WTC11 (cell line): ENCODE measurements at regions of chr19 and their contacts with region 1.

Region 1: GRCh38 chr19:2315818-2316353 is 7.9 kb upstream of the LINGO3 start:
- DNase-seq: peak; percentile 82
- ATAC-seq: peak; percentile 71
- H3K4me3 Mint-ChIP-seq: no peak overlapping the region
- H3K27ac Mint-ChIP-seq: no peak overlapping the region
- H3K4me1 Mint-ChIP-seq: 0 out of 2 replicates have a peak, but pooled peaks cover 2% of the 10 kb centered on the region
- H3K27me3 Mint-ChIP-seq: peaks cover 9% of the 10 kb centered on the region
- CTCF ChIP-seq: no peak

Region 2: DNA sequence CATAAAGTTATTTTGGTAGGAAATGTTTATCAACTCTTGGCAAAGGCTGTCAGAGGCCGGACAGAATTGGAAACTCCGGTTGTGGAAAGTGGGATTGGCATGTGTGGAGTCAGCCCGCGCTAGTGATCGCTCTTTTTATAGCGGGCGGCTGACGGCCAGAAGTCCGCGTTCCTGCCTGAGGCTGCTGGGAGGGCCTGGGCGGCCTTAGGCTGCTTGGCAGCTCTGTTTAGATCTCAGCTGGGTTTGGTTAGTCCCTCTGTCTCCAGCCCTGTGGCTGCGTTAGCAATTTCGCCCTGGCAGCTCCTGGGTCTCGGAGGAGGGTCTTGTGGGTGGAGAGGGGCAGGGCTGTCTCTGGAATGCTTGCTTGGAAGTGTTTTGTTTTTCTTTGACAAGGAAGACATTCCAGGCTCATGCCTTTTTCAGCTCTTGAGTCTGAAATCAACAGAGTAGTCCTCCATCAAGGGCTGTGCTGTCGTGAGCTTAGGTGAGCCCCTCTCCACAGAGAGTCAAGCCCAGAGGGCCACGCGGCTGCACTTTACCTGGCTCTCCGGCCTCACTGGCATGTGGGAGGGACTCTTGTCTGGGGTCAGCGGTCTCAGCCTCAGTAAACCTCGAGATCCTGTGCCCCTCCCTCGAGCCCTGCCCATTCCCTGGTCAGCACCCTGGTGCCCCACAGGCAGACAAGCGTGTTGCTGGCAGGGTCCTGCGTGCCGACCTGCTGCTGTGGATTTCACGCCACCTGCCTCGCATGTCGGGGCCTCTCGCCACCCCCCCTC is 129.6 kb before region 1 on chr19:
- CTCF ChIA-PET with region 1: no interaction called
- POLR2A ChIA-PET with region 1: no interaction called
- DNase-seq: no peak
- ATAC-seq: no peak
- H3K4me3 Mint-ChIP-seq: no peak overlapping the region
- H3K27ac Mint-ChIP-seq: peak overlapping the region; percentile 93; the same call in 1 of the 2 replicates
- H3K4me1 Mint-ChIP-seq: no peaks in the 10 kb centered on the region
- H3K27me3 Mint-ChIP-seq: no peaks in the 10 kb centered on the region
- CTCF ChIP-seq: no peak

Region 3: DNA sequence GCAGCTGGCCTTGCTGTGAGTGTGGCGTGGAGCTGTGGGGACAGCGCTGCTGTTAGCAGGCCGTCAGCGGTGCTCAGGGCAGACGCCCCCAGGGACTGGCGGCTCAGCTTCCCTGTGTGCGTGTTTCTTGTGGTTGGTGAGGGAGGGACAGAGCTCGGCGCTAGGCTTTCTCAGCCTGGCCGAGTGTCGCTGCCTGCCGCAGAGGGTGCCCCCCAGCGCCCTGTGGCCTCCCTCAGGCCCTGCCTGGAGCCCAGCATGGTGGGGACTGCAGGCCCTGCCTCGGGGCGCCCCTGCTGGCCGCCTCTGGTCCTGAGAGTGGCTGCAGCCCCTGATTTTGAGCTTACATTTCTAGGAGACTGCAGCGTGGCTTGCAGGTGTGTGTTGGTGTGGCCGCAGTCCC is 116.7 kb before region 1 on chr19:
- CTCF ChIA-PET with region 1: interaction called, 10 read pairs
- POLR2A ChIA-PET with region 1: no interaction called
- DNase-seq: peak; percentile 62
- ATAC-seq: peak; percentile 89
- H3K4me3 Mint-ChIP-seq: no peak overlapping the region
- H3K27ac Mint-ChIP-seq: peak overlapping the region; percentile 83
- H3K4me1 Mint-ChIP-seq: no peaks in the 10 kb centered on the region
- H3K27me3 Mint-ChIP-seq: no peaks in the 10 kb centered on the region
- CTCF ChIP-seq: peak; percentile 47; the same call in 1 of the 2 replicates

Region 4: GRCh38 chr19:2253106-2254053 is 62.5 kb before region 1 on chr19:
- CTCF ChIA-PET with region 1: interaction called, 14 read pairs
- POLR2A ChIA-PET with region 1: interaction called, 4 read pairs
- DNase-seq: peak; percentile 72
- ATAC-seq: peak; percentile 38
- H3K4me3 Mint-ChIP-seq: peak overlapping the region; percentile 69
- H3K27ac Mint-ChIP-seq: no peak overlapping the region
- H3K4me1 Mint-ChIP-seq: peaks cover 3% of the 10 kb centered on the region; the same call in 1 of the 2 replicates
- H3K27me3 Mint-ChIP-seq: peaks cover 35% of the 10 kb centered on the region
- CTCF ChIP-seq: peak; percentile 50; the same call in 1 of the 2 replicates

Region 5: DNA sequence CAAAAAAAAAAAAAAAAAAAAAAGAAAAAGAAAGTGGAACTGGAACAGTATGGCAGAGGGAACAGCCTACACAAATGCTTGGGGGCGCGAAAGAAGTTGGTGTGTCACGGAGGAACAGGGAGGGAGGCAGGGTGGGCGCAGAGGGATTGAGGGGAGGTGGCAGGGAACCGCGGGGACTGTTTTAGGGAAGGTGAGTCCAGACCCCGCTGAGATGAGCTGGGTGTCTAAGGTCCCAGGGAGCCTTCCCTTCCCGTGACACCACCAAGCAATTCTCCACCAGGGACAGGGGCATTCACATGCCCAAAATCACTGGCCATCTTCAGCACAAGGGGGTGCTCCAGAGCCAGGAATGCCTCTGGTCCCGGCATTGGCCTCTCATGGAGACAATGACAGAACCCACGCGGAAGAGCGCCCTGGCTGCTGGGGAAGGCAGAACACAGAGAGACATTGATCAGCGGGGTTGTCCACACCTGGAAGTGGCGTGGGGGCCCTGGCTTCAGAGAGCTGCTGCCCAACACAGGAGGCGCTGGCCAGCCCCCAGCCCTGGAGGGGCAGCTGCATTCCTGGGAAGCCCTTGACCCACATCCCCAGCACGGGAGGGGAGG is 40.9 kb before region 1 on chr19:
- CTCF ChIA-PET with region 1: interaction called, 42 read pairs
- POLR2A ChIA-PET with region 1: no interaction called
- DNase-seq: peak; percentile 84
- ATAC-seq: peak; percentile 52
- H3K4me3 Mint-ChIP-seq: no peak overlapping the region
- H3K27ac Mint-ChIP-seq: no peak overlapping the region
- H3K4me1 Mint-ChIP-seq: peaks cover 22% of the 10 kb centered on the region
- H3K27me3 Mint-ChIP-seq: no peaks in the 10 kb centered on the region; the same call in 1 of the 2 replicates
- CTCF ChIP-seq: peak; percentile 60; the same call in 1 of the 2 replicates

Region 6: DNA sequence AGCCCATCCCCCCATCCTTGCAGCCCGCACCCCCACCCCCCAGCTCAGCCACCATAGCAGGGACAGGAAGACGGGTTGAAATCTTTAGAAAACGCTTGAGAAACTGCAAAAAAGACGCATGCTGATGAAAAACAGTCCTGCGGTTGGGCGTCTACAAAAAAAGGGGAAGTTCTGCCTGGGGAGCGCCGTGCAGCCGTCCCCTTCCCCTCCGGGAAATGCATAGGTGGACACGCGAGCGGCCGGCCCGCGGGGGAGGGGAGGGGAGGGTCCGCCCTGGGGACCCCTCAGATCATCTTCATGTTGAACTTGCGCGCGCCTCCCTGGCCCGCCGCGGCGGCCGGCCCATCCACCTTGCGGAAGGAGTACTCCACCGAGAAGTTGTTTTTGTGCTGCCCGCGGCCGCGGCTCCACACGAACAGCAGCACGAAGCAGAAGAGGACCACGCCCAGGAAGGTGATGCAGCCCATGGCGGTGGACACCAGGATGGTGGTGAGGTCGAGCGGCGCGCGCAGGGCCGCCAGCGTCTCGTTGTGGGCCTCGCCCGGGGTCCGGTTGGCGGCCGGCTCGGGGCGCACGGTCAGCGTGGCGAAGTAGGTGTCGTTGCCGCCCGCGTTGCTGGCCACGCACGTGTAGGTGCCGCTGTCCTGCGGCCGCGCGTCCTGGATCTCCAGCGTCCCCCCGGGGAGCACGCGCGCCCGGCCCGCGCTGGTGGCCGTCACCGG is 26.0 kb before region 1 on chr19:
- CTCF ChIA-PET with region 1: interaction called, 24 read pairs
- POLR2A ChIA-PET with region 1: no interaction called
- DNase-seq: no peak
- ATAC-seq: no peak
- H3K4me3 Mint-ChIP-seq: peak overlapping the region; percentile 63
- H3K27ac Mint-ChIP-seq: no peak overlapping the region
- H3K4me1 Mint-ChIP-seq: peaks cover 9% of the 10 kb centered on the region; the same call in 1 of the 2 replicates
- H3K27me3 Mint-ChIP-seq: peaks cover 74% of the 10 kb centered on the region
- CTCF ChIP-seq: no peak

Region 7: GRCh38 chr19:2328401-2329148 is 12.7 kb after region 1 on chr19 and contains the starts of genes LSM7 and SPPL2B:
- CTCF ChIA-PET with region 1: interaction called, 20 read pairs
- POLR2A ChIA-PET with region 1: interaction called, 5 read pairs
- DNase-seq: peak; percentile 80
- ATAC-seq: peak; percentile 51
- H3K4me3 Mint-ChIP-seq: peak within 1 kb of the TSS; percentile 100
- H3K27ac Mint-ChIP-seq: peak within 1 kb of the TSS; percentile 98
- H3K4me1 Mint-ChIP-seq: peaks cover 41% of the 10 kb centered on the region
- H3K27me3 Mint-ChIP-seq: no peaks in the 10 kb centered on the region
- CTCF ChIP-seq: no peak
- total RNA-seq, gene LSM7: 245 to 250 TPM (median 248 TPM) in 3 replicates
- total RNA-seq, gene SPPL2B: 94.6 to 117 TPM (median 95.8 TPM) in 3 replicates

Region 8: GRCh38 chr19:2385053-2385721 is 69.3 kb after region 1 on chr19:
- CTCF ChIA-PET with region 1: no interaction called
- POLR2A ChIA-PET with region 1: no interaction called
- DNase-seq: peak; percentile 84
- ATAC-seq: peak; percentile 94
- H3K4me3 Mint-ChIP-seq: peak overlapping the region; percentile 48
- H3K27ac Mint-ChIP-seq: peak overlapping the region; percentile 80
- H3K4me1 Mint-ChIP-seq: peaks cover 3% of the 10 kb centered on the region; the same call in 1 of the 2 replicates
- H3K27me3 Mint-ChIP-seq: peaks cover 9% of the 10 kb centered on the region
- CTCF ChIP-seq: no peak

Region 9: DNA sequence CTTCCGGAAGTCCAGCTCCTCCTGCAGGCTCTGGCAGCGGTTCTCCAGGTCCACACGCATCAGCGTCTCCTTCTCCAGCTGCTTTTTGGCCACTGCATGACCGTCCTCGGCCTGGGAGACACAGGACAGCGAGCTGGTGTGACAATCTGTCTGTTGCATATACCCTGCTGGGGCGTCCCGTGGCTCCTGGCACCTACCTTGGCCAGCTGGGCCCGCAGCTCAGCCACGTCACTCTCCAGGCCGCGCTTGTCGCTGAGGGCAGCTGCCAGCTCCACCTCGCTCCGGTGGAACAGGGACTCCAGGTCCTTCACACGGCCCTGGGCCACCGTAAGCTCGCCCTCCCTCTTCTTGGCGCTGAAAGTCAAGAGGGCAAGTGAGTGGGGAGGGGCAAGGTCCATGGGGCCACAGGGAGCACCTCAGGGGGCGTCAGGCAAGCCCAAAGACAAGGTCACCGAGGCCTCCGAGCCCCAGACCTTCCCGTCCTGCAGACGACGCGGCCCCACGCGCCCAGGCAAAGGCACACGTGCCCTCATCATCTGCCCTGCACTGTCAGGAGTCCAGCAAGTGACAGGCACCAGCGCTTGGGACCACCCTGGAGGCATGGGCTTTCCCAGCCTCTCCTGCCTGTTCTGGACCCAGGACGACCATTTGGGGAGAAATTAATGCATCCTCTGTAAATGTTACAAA is 122.4 kb after region 1 on chr19:
- CTCF ChIA-PET with region 1: no interaction called
- POLR2A ChIA-PET with region 1: no interaction called
- DNase-seq: no peak
- ATAC-seq: no peak
- H3K4me3 Mint-ChIP-seq: no peak overlapping the region
- H3K27ac Mint-ChIP-seq: no peak overlapping the region
- H3K4me1 Mint-ChIP-seq: no peaks in the 10 kb centered on the region
- H3K27me3 Mint-ChIP-seq: no peaks in the 10 kb centered on the region
- CTCF ChIP-seq: no peak

Region 10: GRCh38 chr19:2702162-2703076 is 386.5 kb after region 1 on chr19 and contains the start of gene GNG7:
- CTCF ChIA-PET with region 1: no interaction called
- POLR2A ChIA-PET with region 1: no interaction called
- DNase-seq: peak; percentile 96
- ATAC-seq: peak; percentile 99
- H3K4me3 Mint-ChIP-seq: peak within 1 kb of the TSS; percentile 79
- H3K27ac Mint-ChIP-seq: peak within 1 kb of the TSS; percentile 53; the same call in 1 of the 2 replicates
- H3K4me1 Mint-ChIP-seq: peaks cover 16% of the 10 kb centered on the region
- H3K27me3 Mint-ChIP-seq: peaks cover 24% of the 10 kb centered on the region
- CTCF ChIP-seq: no peak
- total RNA-seq, gene GNG7: 9.6 to 14.3 TPM (median 13.2 TPM) in 3 replicates